B cell (primary cell): ENCODE measurements at regions of chr15 and their contacts with region 1.

Region 1: GRCh38 chr15:57706405-57707209 is at the start of gene POLR2M:
- DNase-seq: peak; percentile 95
- ATAC-seq: peak; percentile 89
- H3K4me3 ChIP-seq: peak within 1 kb of the TSS; percentile 86 to 95 (median 88)
- H3K4me3 Mint-ChIP-seq: peak within 1 kb of the TSS; percentile 88
- H3K27ac ChIP-seq: peak within 1 kb of the TSS; percentile 86 to 95
- H3K27ac Mint-ChIP-seq: peak within 1 kb of the TSS; percentile 85
- H3K4me1 ChIP-seq: peaks cover 17 to 20% of the 10 kb centered on the region in 2 donors
- H3K4me1 Mint-ChIP-seq: peaks cover 45% of the 10 kb centered on the region
- H3K27me3 ChIP-seq: no peaks in the 10 kb centered on the region
- H3K27me3 Mint-ChIP-seq: peaks cover 14% of the 10 kb centered on the region
- CTCF ChIP-seq: no peak
- total RNA-seq, gene POLR2M: 67.4 and 73.2 TPM in 2 replicates

Region 2: DNA sequence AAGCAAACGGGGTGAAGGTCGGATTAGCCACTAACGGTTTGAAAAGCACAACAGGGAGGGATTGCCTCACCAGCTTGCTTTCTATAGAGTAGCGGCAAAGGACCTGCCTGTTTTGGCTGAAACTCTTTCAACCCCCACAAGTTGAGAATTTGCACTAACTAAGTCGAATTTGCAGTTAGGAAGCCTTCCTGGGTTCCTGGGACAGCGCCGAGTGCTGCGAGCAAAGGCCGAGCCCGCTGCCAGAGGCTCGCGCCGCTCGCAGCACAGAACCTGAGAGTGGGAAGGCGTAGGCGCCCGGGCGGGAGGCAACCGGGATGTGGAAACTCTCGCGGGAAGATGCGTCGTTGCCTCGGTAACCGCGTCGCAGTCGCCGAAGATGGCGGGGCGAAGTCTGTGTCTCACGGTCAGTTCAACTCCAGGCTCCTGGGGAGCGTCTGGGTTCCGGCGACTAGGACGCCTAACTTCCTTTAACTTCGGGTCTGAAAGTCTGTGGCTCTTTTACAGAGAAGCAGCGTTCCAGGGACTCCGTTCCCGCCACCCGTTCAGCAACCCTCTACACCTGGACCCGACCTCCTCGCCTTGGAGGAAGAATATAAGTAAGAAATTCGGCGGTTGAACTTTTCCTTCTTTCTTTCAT is 1341.4 kb before region 1 on chr15 and contains the start of gene TEX9:
- CTCF ChIA-PET with region 1: no interaction called
- POLR2A ChIA-PET with region 1: no interaction called
- intact Hi-C with region 1: loop called (anchors 10 kb)
- DNase-seq: peak; percentile 86
- ATAC-seq: peak; percentile 88
- H3K4me3 ChIP-seq: peak within 1 kb of the TSS; percentile 60 to 71 (median 68)
- H3K4me3 Mint-ChIP-seq: peak within 1 kb of the TSS; percentile 95
- H3K27ac ChIP-seq: peak within 1 kb of the TSS; percentile 1 to 71
- H3K27ac Mint-ChIP-seq: peak within 1 kb of the TSS; percentile 90
- H3K4me1 ChIP-seq: peaks cover 15% of the 10 kb centered on the region in 2 donors
- H3K4me1 Mint-ChIP-seq: peaks cover 36% of the 10 kb centered on the region
- H3K27me3 ChIP-seq: peaks cover 0 to 8% (median 5%) of the 10 kb centered on the region in 4 experiments
- H3K27me3 Mint-ChIP-seq: no peaks in the 10 kb centered on the region
- CTCF ChIP-seq: no peak
- total RNA-seq, gene TEX9: 41.8 and 43.1 TPM in 2 replicates

Region 3: GRCh38 chr15:57551717-57552677 is 154.6 kb before region 1 on chr15:
- CTCF ChIA-PET with region 1: no interaction called
- POLR2A ChIA-PET with region 1: no interaction called
- intact Hi-C with region 1: no loop called
- DNase-seq: no peak
- ATAC-seq: no peak
- H3K4me3 ChIP-seq: no peak overlapping the region
- H3K4me3 Mint-ChIP-seq: no peak overlapping the region
- H3K27ac ChIP-seq: no peak overlapping the region
- H3K27ac Mint-ChIP-seq: no peak overlapping the region
- H3K4me1 ChIP-seq: no peaks in the 10 kb centered on the region
- H3K4me1 Mint-ChIP-seq: no peaks in the 10 kb centered on the region
- H3K27me3 ChIP-seq: peaks cover 0 to 4% (median 0%) of the 10 kb centered on the region in 4 experiments
- H3K27me3 Mint-ChIP-seq: peaks cover 8% of the 10 kb centered on the region
- CTCF ChIP-seq: no peak

Region 4: GRCh38 chr15:57591646-57592367 is 114.8 kb before region 1 on chr15 and contains the start of gene MYZAP:
- CTCF ChIA-PET with region 1: no interaction called
- POLR2A ChIA-PET with region 1: interaction called, 3 read pairs
- intact Hi-C with region 1: loop called (anchors 5 kb)
- DNase-seq: peak; percentile 69
- ATAC-seq: peak; percentile 92
- H3K4me3 ChIP-seq: peak within 1 kb of the TSS in 4 of 5 experiments; percentile 40 to 70 (median 60)
- H3K4me3 Mint-ChIP-seq: peak within 1 kb of the TSS; percentile 82
- H3K27ac ChIP-seq: no peak within 1 kb of the TSS
- H3K27ac Mint-ChIP-seq: peak within 1 kb of the TSS; percentile 42
- H3K4me1 ChIP-seq: peaks cover 46 to 48% of the 10 kb centered on the region in 2 donors
- H3K4me1 Mint-ChIP-seq: peaks cover 49% of the 10 kb centered on the region
- H3K27me3 ChIP-seq: peaks cover 0 to 3% (median 0%) of the 10 kb centered on the region in 4 experiments
- H3K27me3 Mint-ChIP-seq: peaks cover 10% of the 10 kb centered on the region
- CTCF ChIP-seq: no peak
- total RNA-seq, gene MYZAP: 1.0 and 1.4 TPM in 2 replicates

Region 5: GRCh38 chr15:57685306-57686095 is 21.1 kb before region 1 on chr15:
- CTCF ChIA-PET with region 1: no interaction called
- POLR2A ChIA-PET with region 1: no interaction called
- intact Hi-C with region 1: no loop called
- DNase-seq: no peak
- ATAC-seq: no peak
- H3K4me3 ChIP-seq: no peak overlapping the region
- H3K4me3 Mint-ChIP-seq: no peak overlapping the region
- H3K27ac ChIP-seq: no peak overlapping the region
- H3K27ac Mint-ChIP-seq: no peak overlapping the region
- H3K4me1 ChIP-seq: no peaks in the 10 kb centered on the region
- H3K4me1 Mint-ChIP-seq: no peaks in the 10 kb centered on the region
- H3K27me3 ChIP-seq: no peaks in the 10 kb centered on the region
- H3K27me3 Mint-ChIP-seq: no peaks in the 10 kb centered on the region
- CTCF ChIP-seq: no peak

Region 6: DNA sequence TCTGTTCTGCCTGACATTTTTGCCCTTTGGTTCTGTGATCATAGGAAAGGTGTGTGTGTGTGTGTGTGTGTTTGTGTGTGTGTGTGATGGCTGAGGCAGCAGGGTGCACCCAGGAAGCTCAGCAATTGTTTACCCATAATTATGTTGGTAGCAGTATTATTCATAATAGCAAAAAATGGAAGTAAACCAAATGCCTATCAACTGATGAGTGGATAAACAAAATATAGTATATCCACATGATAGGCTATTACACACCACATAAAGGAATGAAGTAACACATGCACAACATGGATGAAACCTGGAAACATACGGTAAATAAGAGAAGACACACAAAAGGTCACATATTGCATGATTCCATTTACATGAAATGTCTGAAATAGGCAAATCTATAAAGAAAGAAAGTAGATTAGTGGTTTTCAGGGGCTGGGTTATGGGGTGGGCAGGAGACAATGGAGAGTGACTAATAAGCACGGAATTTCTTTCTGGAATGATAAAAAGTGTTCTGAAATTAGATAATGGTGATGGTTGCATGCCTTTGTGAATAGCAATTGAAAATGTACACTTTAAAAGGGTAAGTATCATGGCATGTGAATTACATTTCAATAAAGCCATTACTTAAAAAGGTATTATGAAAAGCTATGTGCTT is 167.1 kb after region 1 on chr15:
- CTCF ChIA-PET with region 1: no interaction called
- POLR2A ChIA-PET with region 1: no interaction called
- intact Hi-C with region 1: no loop called
- DNase-seq: no peak
- ATAC-seq: no peak
- H3K4me3 ChIP-seq: no peak overlapping the region
- H3K4me3 Mint-ChIP-seq: no peak overlapping the region
- H3K27ac ChIP-seq: no peak overlapping the region
- H3K27ac Mint-ChIP-seq: no peak overlapping the region
- H3K4me1 ChIP-seq: no peaks in the 10 kb centered on the region
- H3K4me1 Mint-ChIP-seq: no peaks in the 10 kb centered on the region
- H3K27me3 ChIP-seq: peaks cover 0 to 22% (median 11%) of the 10 kb centered on the region in 4 experiments
- H3K27me3 Mint-ChIP-seq: peaks cover 56% of the 10 kb centered on the region
- CTCF ChIP-seq: no peak